Esophagus squamous epithelium (tissue), 5 donors: ENCODE measurements at regions of chr3 and their contacts with region 1.

Region 1: GRCh38 chr3:160003520-160004128 is 15.0 kb downstream of the IL12A start:
- DNase-seq: no peak
- H3K4me3 ChIP-seq: no peak overlapping the region
- H3K27ac ChIP-seq: no peak overlapping the region
- H3K4me1 ChIP-seq: peaks cover 0 to 27% (median 0%) of the 10 kb centered on the region in 3 donors
- H3K27me3 ChIP-seq: no peaks in the 10 kb centered on the region
- CTCF ChIP-seq: peak; percentile 26 to 44 (median 36)
- POLR2A ChIP-seq: no peak

Region 2: GRCh38 chr3:159884661-159885402 is 118.8 kb before region 1 on chr3:
- intact Hi-C with region 1: loop called (anchors 10 kb)
- DNase-seq: no peak
- H3K4me3 ChIP-seq: no peak overlapping the region
- H3K27ac ChIP-seq: no peak overlapping the region
- H3K4me1 ChIP-seq: peaks cover 0 to 33% (median 17%) of the 10 kb centered on the region in 3 donors
- H3K27me3 ChIP-seq: no peaks in the 10 kb centered on the region
- CTCF ChIP-seq: peak; percentile 17 to 61 (median 44)
- POLR2A ChIP-seq: no peak